ENCODE measurements at regions of chr5 and their contacts with region 1.

Region 1: DNA sequence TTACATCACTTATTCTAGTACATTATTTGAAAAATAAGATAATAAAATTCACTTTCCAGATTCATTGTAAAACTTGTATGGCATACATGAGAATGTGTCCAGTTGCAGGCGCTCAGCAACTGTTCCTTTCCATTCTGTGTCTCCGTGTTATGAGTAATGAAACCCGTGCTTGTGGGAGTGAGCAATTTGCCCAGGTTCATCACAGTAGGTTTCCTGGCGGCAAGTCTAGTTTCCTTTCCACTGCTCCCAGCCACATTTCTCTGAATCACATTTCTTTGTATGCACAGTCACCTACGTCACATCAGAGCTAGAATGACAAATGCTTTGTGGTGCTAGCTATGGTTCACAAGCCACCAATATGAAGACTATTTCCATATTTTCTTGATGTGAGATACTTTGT is 39.9 kb downstream of the MOCS2 start:
- DNase-seq: peak; percentile 71
- H3K4me3 Mint-ChIP-seq: peak overlapping the region; percentile 41
- H3K27ac Mint-ChIP-seq: peak overlapping the region; percentile 82
- H3K4me1 Mint-ChIP-seq: peaks cover 41% of the 10 kb centered on the region
- H3K27me3 Mint-ChIP-seq: no peaks in the 10 kb centered on the region

Region 2: DNA sequence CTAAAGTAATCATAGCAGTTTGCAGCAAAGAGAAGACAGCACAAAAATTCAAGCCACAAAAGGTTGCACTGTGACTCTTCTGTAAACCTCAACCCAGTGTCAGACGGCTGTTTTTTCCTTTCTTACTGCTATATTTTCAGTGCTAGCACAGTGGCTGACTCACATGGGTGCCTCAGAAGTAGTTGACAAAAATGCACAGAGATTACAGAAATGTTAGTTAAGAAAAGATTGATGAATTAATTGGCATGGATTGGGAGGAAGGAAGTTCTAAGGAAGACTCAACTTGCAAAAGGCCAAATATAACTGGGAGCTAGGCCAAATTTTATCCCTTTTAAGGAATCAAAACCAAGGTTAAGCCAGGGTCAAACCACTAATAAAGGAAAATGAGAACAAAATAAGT is 325.7 kb before region 1 on chr5:
- intact Hi-C with region 1: loop called (anchors 5 kb)
- DNase-seq: peak; percentile 66
- H3K4me3 Mint-ChIP-seq: peak overlapping the region; percentile 49
- H3K27ac Mint-ChIP-seq: peak overlapping the region; percentile 78
- H3K4me1 Mint-ChIP-seq: peaks cover 80% of the 10 kb centered on the region
- H3K27me3 Mint-ChIP-seq: no peaks in the 10 kb centered on the region

Region 3: GRCh38 chr5:52948418-52949076 is 121.1 kb before region 1 on chr5:
- intact Hi-C with region 1: loop called (anchors 1 kb)
- DNase-seq: peak; percentile 51
- H3K4me3 Mint-ChIP-seq: no peak overlapping the region
- H3K27ac Mint-ChIP-seq: no peak overlapping the region
- H3K4me1 Mint-ChIP-seq: peaks cover 31% of the 10 kb centered on the region
- H3K27me3 Mint-ChIP-seq: no peaks in the 10 kb centered on the region

Region 4: DNA sequence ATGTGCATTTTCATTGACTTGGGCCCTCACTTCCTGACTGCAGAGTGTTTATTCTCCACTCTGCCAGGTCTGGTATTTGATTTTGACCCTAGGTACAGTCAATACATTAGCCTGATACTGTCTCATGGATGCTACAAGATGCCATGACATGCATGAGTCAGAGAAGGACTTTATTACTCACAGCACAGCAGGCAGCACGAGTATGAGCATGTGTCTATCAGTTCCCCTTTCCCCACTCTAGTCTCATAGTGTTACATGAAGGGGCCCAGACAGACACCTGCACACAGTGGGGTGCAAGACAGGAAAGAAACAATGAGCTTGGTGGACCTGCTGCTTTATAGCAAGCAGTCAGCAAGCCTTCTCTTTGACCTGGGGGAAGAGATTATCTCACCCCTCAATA is 60.9 kb before region 1 on chr5:
- intact Hi-C with region 1: loop called (anchors 1 kb)
- DNase-seq: peak; percentile 20
- H3K4me3 Mint-ChIP-seq: peak overlapping the region; percentile 41
- H3K27ac Mint-ChIP-seq: peak overlapping the region; percentile 87
- H3K4me1 Mint-ChIP-seq: peaks cover 75% of the 10 kb centered on the region
- H3K27me3 Mint-ChIP-seq: peaks cover 5% of the 10 kb centered on the region

Region 5: DNA sequence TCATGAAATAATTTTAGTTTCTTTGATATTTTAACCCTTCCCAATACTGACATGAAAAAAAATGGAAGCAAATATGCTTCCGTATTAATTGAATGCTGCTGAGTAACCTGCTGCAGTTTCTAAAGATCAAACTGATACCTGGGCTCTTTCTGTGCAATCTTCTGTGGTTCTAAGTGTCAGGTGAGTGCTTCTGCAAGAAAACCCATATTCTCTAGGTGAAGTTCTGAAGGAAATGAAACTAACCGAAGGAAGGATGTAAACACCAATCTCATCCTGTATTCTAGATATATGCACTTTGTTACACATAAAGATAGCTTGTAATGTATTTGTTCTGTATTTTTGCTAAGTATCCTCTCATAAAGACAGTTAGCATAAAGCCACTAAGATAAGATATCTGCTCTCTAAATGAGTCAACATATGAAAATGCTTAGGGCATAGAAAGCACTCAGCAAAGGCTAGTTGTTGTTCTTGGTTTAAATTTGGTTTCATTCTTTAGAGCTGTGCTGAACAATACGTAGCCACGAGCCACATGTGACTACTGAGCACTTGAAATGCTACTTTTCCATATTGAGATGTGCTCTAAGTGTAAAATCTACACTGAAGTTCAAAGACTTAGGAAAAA is 28.4 kb before region 1 on chr5:
- intact Hi-C with region 1: loop called (anchors 1 kb)
- DNase-seq: peak; percentile 22
- H3K4me3 Mint-ChIP-seq: peak overlapping the region; percentile 57
- H3K27ac Mint-ChIP-seq: peak overlapping the region; percentile 75
- H3K4me1 Mint-ChIP-seq: peaks cover 70% of the 10 kb centered on the region
- H3K27me3 Mint-ChIP-seq: no peaks in the 10 kb centered on the region

Region 6: GRCh38 chr5:53089345-53089991 is 19.8 kb after region 1 on chr5:
- intact Hi-C with region 1: loop called (anchors 1 kb)
- DNase-seq: no peak
- H3K4me3 Mint-ChIP-seq: peak overlapping the region; percentile 53
- H3K27ac Mint-ChIP-seq: peak overlapping the region; percentile 75
- H3K4me1 Mint-ChIP-seq: peaks cover 54% of the 10 kb centered on the region
- H3K27me3 Mint-ChIP-seq: peaks cover 6% of the 10 kb centered on the region

Measured in activated T-helper 1 cell treated with anti-CD3 and anti-CD28 coated beads, Interleukin-12 subunit alpha, Interleukin-12 subunit beta, Interleukin-2, Interleukin-4 antibody, amounts not matched to agents 30 ng/mL and 10 ng/mL and 1 ng/mL, durations not matched to agents 14 hours and 24 hours and 36 hours (primary cell).